ENCODE measurements at regions of chr6 and their contacts with region 1.

Region 1: GRCh38 chr6:67563671-67564070 is 1071.4 kb upstream of the ADGRB3 start:
- DNase-seq: no peak
- ATAC-seq: no peak
- H3K4me3 ChIP-seq: no peak overlapping the region
- H3K27ac ChIP-seq: no peak overlapping the region
- H3K4me1 ChIP-seq: no peaks in the 10 kb centered on the region
- H3K27me3 ChIP-seq: no peaks in the 10 kb centered on the region
- CTCF ChIP-seq: no peak
- EP300 ChIP-seq: no peak
- POLR2A ChIP-seq: no peak
- RAD21 ChIP-seq: no peak

Region 2: GRCh38 chr6:67541586-67541985 is 22.1 kb before region 1 on chr6:
- CTCF ChIA-PET with region 1: no interaction called
- POLR2A ChIA-PET with region 1: no interaction called
- in situ Hi-C with region 1: no loop called
- intact Hi-C with region 1: no loop called
- DNase-seq: no peak
- ATAC-seq: no peak
- H3K4me3 ChIP-seq: no peak overlapping the region
- H3K27ac ChIP-seq: no peak overlapping the region
- H3K4me1 ChIP-seq: no peaks in the 10 kb centered on the region
- H3K27me3 ChIP-seq: no peaks in the 10 kb centered on the region
- CTCF ChIP-seq: no peak
- EP300 ChIP-seq: no peak
- POLR2A ChIP-seq: no peak
- RAD21 ChIP-seq: no peak

Region 3: GRCh38 chr6:67606903-67607828 is 43.5 kb after region 1 on chr6:
- CTCF ChIA-PET with region 1: no interaction called
- POLR2A ChIA-PET with region 1: no interaction called
- in situ Hi-C with region 1: no loop called
- intact Hi-C with region 1: loop called (anchors 1 kb)
- DNase-seq: no peak
- ATAC-seq: no peak
- H3K4me3 ChIP-seq: no peak overlapping the region
- H3K27ac ChIP-seq: no peak overlapping the region
- H3K4me1 ChIP-seq: no peaks in the 10 kb centered on the region
- H3K27me3 ChIP-seq: no peaks in the 10 kb centered on the region
- CTCF ChIP-seq: no peak
- EP300 ChIP-seq: no peak
- POLR2A ChIP-seq: no peak
- RAD21 ChIP-seq: no peak

Region 4: GRCh38 chr6:67766057-67766456 is 202.4 kb after region 1 on chr6:
- CTCF ChIA-PET with region 1: no interaction called
- POLR2A ChIA-PET with region 1: no interaction called
- in situ Hi-C with region 1: no loop called
- intact Hi-C with region 1: no loop called
- DNase-seq: no peak
- ATAC-seq: no peak
- H3K4me3 ChIP-seq: no peak overlapping the region
- H3K27ac ChIP-seq: no peak overlapping the region
- H3K4me1 ChIP-seq: no peaks in the 10 kb centered on the region
- H3K27me3 ChIP-seq: no peaks in the 10 kb centered on the region
- CTCF ChIP-seq: no peak
- EP300 ChIP-seq: no peak
- POLR2A ChIP-seq: no peak
- RAD21 ChIP-seq: no peak

Measured in HepG2 (cell line).